ENCODE measurements at regions of chr1 and their contacts with region 1.

Region 1: DNA sequence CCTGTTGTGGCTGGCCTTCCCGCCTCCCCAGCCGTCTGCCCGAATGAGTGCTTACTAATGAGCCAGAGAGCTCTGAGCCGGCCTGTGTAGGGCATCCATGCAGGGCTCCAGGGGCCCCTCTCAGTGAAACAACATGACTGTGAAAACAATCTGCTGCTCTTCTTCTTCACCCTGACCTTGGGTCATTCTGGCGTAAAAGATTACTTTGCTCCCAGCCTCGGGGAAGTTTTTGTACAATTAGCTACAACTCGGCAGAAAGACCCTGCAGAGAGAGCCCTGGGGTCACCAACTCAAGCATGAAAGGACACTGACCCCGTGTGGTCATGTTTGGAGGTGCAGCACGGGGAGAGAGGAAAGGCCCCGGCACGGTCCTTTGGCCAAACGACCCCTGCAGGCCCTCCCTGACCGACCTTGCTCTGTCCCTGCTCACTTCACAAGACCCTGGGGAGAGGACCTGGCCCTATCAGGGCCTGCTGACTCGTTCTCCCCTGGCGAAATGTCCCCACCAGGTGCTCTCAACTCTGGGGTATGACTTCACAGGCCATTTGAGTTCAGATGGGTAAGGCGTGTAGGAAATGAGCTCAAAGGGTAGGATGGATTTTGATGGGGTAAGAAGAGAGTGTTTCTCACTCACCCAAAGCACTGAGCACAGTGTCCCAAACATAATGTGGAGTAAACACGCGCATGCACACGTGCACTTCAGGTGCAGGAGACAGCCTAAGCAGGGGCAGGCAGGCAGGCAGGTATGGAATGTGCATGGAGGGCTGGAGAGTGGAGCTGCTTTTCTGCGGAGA is 22.9 kb upstream of the FAM20B start:
- DNase-seq: peak; percentile 44 to 89 (median 70)
- ATAC-seq: peak; percentile 75 to 96 (median 92)
- H3K4me3 ChIP-seq: no peak overlapping the region
- H3K27ac ChIP-seq: no peak overlapping the region
- H3K4me1 ChIP-seq: no peaks in the 10 kb centered on the region
- H3K27me3 ChIP-seq: no peaks in the 10 kb centered on the region
- CTCF ChIP-seq: peak; percentile 87 to 98 (median 96)

Region 2: DNA sequence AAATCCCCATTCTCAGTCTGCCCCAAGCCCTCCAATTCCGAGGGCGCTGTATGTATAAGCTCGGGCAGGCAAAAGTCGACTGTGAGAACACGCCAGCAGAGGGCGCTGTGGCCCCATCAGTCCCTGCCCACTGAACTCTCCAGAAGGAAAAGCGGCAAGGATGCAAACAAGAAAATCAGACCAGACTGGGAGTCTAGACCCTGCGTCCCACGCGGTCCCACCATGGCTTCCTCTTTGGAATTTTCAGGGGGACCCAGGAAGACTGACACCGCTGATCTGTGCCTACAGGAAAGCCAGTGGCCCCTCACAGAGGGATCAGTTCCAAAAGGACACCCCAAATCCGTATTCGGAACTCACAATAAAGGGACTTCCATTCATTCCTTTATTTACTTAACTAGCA is 470.4 kb before region 1 on chr1:
- intact Hi-C with region 1: loop called in 1 of 3 experiments (anchors 5 kb)
- DNase-seq: peak; percentile 62 to 95 (median 86)
- ATAC-seq: peak; percentile 69 to 89 (median 85)
- H3K4me3 ChIP-seq: no peak overlapping the region
- H3K27ac ChIP-seq: no peak overlapping the region
- H3K4me1 ChIP-seq: no peaks in the 10 kb centered on the region
- H3K27me3 ChIP-seq: no peaks in the 10 kb centered on the region
- CTCF ChIP-seq: peak; percentile 79 to 90 (median 87)

Region 3: GRCh38 chr1:178542560-178543356 is 460.0 kb before region 1 on chr1:
- intact Hi-C with region 1: loop called in 2 of 3 experiments (anchors 5 kb)
- DNase-seq: peak; percentile 76 to 99 (median 90)
- ATAC-seq: peak; percentile 92 to 97 (median 93)
- H3K4me3 ChIP-seq: peak overlapping the region; percentile 60 to 86 (median 72)
- H3K27ac ChIP-seq: peak overlapping the region; percentile 44 to 84 (median 67)
- H3K4me1 ChIP-seq: no peaks in the 10 kb centered on the region
- H3K27me3 ChIP-seq: no peaks in the 10 kb centered on the region
- CTCF ChIP-seq: peak; percentile 99 to 100 (median 100)

Region 4: DNA sequence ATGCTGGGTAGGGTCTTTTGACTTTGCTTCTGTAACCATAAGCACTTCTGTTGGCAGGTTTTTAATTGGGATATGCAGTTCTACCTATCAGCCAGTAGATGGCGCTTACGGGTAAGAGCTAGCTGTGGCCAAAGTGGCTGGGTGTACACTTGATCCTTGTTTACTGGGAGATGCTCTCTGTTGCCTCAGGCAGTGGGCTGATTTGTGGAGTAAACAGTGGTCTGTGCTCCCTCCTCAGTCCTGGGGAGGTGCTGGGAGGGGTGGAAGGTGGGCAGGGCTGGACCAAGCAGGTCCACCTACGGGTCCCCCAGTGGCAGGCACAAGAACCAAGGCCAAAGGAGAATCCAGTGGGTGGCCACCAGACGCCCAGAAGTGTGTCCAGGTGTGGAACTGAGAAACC is 234.3 kb before region 1 on chr1:
- intact Hi-C with region 1: loop called in 2 of 3 experiments (anchors 10 kb)
- DNase-seq: peak in 1 of 6 donors; percentile 35
- ATAC-seq: peak in 2 of 4 donors; percentile 29 to 55
- H3K4me3 ChIP-seq: no peak overlapping the region
- H3K27ac ChIP-seq: no peak overlapping the region
- H3K4me1 ChIP-seq: no peaks in the 10 kb centered on the region
- H3K27me3 ChIP-seq: no peaks in the 10 kb centered on the region
- CTCF ChIP-seq: peak in 2 of 4 donors; percentile 20 to 41

Region 5: GRCh38 chr1:179384027-179384426 is 381.3 kb after region 1 on chr1:
- intact Hi-C with region 1: no loop called
- DNase-seq: no peak
- ATAC-seq: no peak
- H3K4me3 ChIP-seq: no peak overlapping the region
- H3K27ac ChIP-seq: no peak overlapping the region
- H3K4me1 ChIP-seq: no peaks in the 10 kb centered on the region
- H3K27me3 ChIP-seq: no peaks in the 10 kb centered on the region
- CTCF ChIP-seq: no peak